PC-3 (cell line): ENCODE measurements at regions of chr17 and their contacts with region 1.

Region 1: GRCh38 chr17:66165513-66166123 is 26.3 kb downstream of the CEP112 start:
- DNase-seq: peak; percentile 83
- ATAC-seq: peak; percentile 59
- H3K4me3 ChIP-seq: no peak overlapping the region
- H3K27ac ChIP-seq: no peak overlapping the region
- H3K4me1 ChIP-seq: no peaks in the 10 kb centered on the region
- H3K27me3 ChIP-seq: no peaks in the 10 kb centered on the region
- CTCF ChIP-seq: peak; percentile 95

Region 2: GRCh38 chr17:65231662-65232335 is 933.8 kb before region 1 on chr17:
- CTCF ChIA-PET with region 1: interaction called, 4 read pairs
- POLR2A ChIA-PET with region 1: no interaction called
- intact Hi-C with region 1: loop called (anchors 1 kb)
- DNase-seq: peak; percentile 91
- ATAC-seq: peak; percentile 90
- H3K4me3 ChIP-seq: no peak overlapping the region
- H3K27ac ChIP-seq: no peak overlapping the region
- H3K4me1 ChIP-seq: peaks cover 33% of the 10 kb centered on the region
- H3K27me3 ChIP-seq: no peaks in the 10 kb centered on the region
- CTCF ChIP-seq: peak; percentile 98

Region 3: GRCh38 chr17:65294179-65294720 is 871.4 kb before region 1 on chr17:
- CTCF ChIA-PET with region 1: interaction called, 14 read pairs
- POLR2A ChIA-PET with region 1: no interaction called
- intact Hi-C with region 1: loop called (anchors 5 kb)
- DNase-seq: peak; percentile 83
- ATAC-seq: peak; percentile 98
- H3K4me3 ChIP-seq: no peak overlapping the region
- H3K27ac ChIP-seq: no peak overlapping the region
- H3K4me1 ChIP-seq: no peaks in the 10 kb centered on the region
- H3K27me3 ChIP-seq: no peaks in the 10 kb centered on the region
- CTCF ChIP-seq: peak; percentile 99

Region 4: DNA sequence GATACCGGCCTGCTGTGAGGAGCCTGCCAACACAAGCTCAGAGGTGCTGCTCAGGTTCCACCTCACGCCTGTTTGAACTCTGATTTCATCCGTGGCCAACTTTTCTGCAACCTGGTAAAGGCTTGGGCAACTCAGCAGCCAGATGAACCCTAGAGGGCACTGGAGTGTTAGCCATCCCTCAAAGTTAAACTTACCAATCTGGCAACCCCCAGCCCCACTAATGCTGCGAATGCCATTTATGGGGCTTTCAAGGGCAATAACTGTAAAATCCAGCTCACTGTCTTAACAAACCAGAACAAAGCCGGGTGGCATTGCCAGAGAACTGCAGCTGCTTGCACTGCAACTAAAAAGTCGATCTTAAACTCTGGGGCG is 709.7 kb before region 1 on chr17:
- CTCF ChIA-PET with region 1: no interaction called
- POLR2A ChIA-PET with region 1: no interaction called
- intact Hi-C with region 1: loop called (anchors 1 kb)
- DNase-seq: peak; percentile 43
- ATAC-seq: peak; percentile 64
- H3K4me3 ChIP-seq: no peak overlapping the region
- H3K27ac ChIP-seq: no peak overlapping the region
- H3K4me1 ChIP-seq: no peaks in the 10 kb centered on the region
- H3K27me3 ChIP-seq: 0 out of 2 replicates have a peak, but pooled peaks cover 2% of the 10 kb centered on the region
- CTCF ChIP-seq: peak; percentile 59

Region 5: DNA sequence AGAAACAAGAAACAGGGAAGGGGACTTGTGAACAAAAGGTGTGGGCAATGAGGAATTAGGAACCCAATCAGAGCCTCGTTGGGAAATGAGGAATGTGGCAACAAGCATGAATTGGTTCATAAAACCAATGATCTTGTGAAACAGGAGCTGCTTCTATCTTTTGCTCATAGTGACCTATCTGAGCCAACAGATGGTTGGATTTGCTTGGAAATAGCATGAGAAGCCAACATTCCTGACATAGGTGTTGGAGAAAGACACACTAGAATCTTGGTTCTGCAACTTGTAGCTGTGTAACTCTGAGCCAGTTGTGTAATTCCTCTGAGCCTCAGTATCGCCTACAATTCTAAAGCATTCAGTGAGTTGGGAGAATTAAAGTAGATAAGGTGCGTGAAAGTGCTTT is 352.3 kb before region 1 on chr17:
- CTCF ChIA-PET with region 1: no interaction called
- POLR2A ChIA-PET with region 1: no interaction called
- intact Hi-C with region 1: loop called (anchors 5 kb)
- DNase-seq: no peak
- ATAC-seq: no peak
- H3K4me3 ChIP-seq: no peak overlapping the region
- H3K27ac ChIP-seq: no peak overlapping the region
- H3K4me1 ChIP-seq: no peaks in the 10 kb centered on the region
- H3K27me3 ChIP-seq: no peaks in the 10 kb centered on the region
- CTCF ChIP-seq: no peak